Colonic mucosa (tissue), 4 donors: ENCODE measurements at regions of chr14 and their contacts with region 1.

Region 1: DNA sequence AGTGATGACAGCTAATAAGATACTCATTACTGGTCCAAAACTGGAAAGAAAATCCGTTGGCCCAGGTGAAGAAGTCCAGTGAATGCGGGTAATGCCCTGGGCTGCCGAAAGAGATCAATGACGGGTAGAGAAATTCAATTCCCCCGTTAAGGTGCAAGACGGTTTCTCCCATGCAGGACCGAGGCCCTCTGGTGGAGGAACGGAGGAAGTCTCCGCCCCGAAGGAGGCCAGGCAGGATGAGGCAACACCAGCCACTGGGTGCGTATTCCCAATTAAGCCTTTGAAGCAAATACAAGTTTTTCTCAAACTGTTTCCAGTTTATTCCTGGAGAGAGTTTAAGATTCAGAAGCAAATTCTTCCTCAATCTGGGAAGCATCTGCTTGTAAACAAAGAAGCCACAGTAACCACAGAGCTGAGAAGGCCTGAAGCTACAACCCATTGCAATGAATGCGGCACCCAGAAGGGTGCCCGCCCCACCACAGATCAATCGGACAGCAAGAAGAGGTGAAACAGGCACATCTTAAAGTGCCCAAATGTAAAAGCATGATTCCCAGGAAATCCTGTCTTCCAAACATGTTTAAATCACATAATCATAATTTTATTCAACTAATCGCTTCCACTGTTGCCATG is 118.5 kb downstream of the TTC7B start:
- DNase-seq: peak; percentile 83
- H3K4me3 ChIP-seq: no peak overlapping the region
- H3K27ac ChIP-seq: peak overlapping the region; percentile 38
- H3K4me1 ChIP-seq: peaks cover 4% of the 10 kb centered on the region
- H3K27me3 ChIP-seq: no peaks in the 10 kb centered on the region
- CTCF ChIP-seq: peak; percentile 98

Region 2: GRCh38 chr14:90301668-90302090 is 396.0 kb before region 1 on chr14:
- intact Hi-C with region 1: loop called (anchors 5 kb)
- DNase-seq: no peak
- H3K4me3 ChIP-seq: no peak overlapping the region
- H3K27ac ChIP-seq: no peak overlapping the region
- H3K4me1 ChIP-seq: no peaks in the 10 kb centered on the region
- H3K27me3 ChIP-seq: no peaks in the 10 kb centered on the region
- CTCF ChIP-seq: peak; percentile 33

Region 3: GRCh38 chr14:90518941-90519256 is 178.8 kb before region 1 on chr14:
- intact Hi-C with region 1: loop called (anchors 5 kb)
- DNase-seq: peak; percentile 70
- H3K4me3 ChIP-seq: no peak overlapping the region
- H3K27ac ChIP-seq: no peak overlapping the region
- H3K4me1 ChIP-seq: peaks cover 32% of the 10 kb centered on the region
- H3K27me3 ChIP-seq: no peaks in the 10 kb centered on the region
- CTCF ChIP-seq: peak; percentile 41

Region 4: DNA sequence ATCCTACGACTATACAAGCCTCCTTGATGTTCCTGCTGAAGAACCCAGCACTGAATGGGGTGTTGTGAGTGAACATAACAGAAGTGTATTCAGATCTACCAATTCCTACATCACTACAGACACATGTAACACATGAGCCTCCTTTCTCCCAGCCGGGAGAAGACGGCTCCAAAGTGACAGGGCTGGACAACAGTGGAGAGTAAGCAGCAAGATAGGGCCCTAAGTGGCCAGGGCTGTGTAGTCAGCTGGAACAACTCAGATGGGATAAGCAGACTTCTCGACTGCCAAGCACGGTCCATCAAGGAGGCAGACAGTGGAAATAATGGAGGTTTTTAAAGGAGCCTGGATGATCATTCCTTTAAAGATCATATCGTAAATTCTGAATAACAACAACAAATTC is 45.0 kb after region 1 on chr14:
- intact Hi-C with region 1: no loop called
- DNase-seq: no peak
- H3K4me3 ChIP-seq: no peak overlapping the region
- H3K27ac ChIP-seq: no peak overlapping the region
- H3K4me1 ChIP-seq: no peaks in the 10 kb centered on the region
- H3K27me3 ChIP-seq: no peaks in the 10 kb centered on the region
- CTCF ChIP-seq: no peak

Region 5: GRCh38 chr14:90839024-90839888 is 141.6 kb after region 1 on chr14:
- intact Hi-C with region 1: no loop called
- DNase-seq: no peak
- H3K4me3 ChIP-seq: no peak overlapping the region
- H3K27ac ChIP-seq: no peak overlapping the region
- H3K4me1 ChIP-seq: no peaks in the 10 kb centered on the region
- H3K27me3 ChIP-seq: no peaks in the 10 kb centered on the region
- CTCF ChIP-seq: no peak